Activated CD4-positive, alpha-beta T cell treated with anti-CD3 and anti-CD28 coated beads for 36 hours (primary cell): ENCODE measurements at regions of chr3 and their contacts with region 1.

Region 1: DNA sequence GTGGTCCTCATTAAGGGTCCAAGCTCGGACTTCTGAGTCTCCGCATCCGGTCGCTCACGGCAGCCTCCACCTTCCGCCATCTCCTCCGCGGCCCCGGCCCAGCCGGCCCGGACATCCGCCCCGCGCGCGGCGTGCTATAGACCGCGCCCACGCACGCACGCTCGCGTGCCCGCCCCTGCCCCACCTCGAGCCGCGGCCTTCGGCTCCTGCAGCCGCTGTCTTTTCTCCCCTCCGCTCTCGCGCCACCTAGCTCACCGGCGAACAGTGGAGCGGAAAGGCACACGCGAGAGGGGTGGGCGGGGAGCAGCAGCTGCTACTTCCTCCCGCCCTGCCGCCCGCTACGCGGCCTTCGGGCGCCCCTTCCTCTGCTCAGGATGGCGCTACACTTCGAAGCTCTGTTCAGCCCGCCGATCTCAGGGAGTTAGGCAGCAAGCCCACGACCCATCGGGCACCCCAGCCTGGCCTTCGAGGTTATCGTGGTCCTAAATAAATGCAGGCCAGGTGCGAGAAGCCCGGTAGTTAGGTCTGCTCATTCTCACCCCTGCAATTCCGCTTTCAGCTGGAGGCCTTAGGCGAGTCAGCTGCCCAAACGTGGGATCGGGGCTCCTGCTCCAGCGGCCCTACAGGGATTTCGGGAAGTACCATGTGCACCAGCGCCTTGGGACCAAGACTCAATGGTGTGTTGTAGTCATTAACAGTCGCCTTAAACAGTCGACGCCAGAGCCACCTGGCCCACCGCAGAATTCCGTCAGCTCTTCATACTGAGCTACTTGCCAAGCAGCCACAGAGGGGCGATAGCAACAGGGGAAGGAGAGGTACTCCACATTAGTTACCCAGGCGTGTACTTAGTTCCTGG is at the start of gene USP4:
- DNase-seq: peak; percentile 97
- ATAC-seq: peak; percentile 89
- H3K4me3 Mint-ChIP-seq: peak within 1 kb of the TSS; percentile 99
- H3K27ac Mint-ChIP-seq: peak within 1 kb of the TSS; percentile 96
- H3K4me1 Mint-ChIP-seq: peaks cover 49% of the 10 kb centered on the region
- H3K27me3 Mint-ChIP-seq: no peaks in the 10 kb centered on the region
- total RNA-seq, gene USP4: 69.3 to 71.8 TPM

Region 2: GRCh38 chr3:49007068-49007770 is 333.0 kb before region 1 on chr3 and contains the start of gene WDR6:
- CTCF ChIA-PET with region 1: no interaction called
- POLR2A ChIA-PET with region 1: no interaction called
- intact Hi-C with region 1: loop called in 1 of 2 experiments (anchors 1 kb)
- DNase-seq: peak; percentile 99
- ATAC-seq: peak; percentile 90
- H3K4me3 Mint-ChIP-seq: peak within 1 kb of the TSS; percentile 100
- H3K27ac Mint-ChIP-seq: peak within 1 kb of the TSS; percentile 100
- H3K4me1 Mint-ChIP-seq: peaks cover 16% of the 10 kb centered on the region
- H3K27me3 Mint-ChIP-seq: no peaks in the 10 kb centered on the region
- total RNA-seq, gene WDR6: 109 to 127 TPM

Region 3: DNA sequence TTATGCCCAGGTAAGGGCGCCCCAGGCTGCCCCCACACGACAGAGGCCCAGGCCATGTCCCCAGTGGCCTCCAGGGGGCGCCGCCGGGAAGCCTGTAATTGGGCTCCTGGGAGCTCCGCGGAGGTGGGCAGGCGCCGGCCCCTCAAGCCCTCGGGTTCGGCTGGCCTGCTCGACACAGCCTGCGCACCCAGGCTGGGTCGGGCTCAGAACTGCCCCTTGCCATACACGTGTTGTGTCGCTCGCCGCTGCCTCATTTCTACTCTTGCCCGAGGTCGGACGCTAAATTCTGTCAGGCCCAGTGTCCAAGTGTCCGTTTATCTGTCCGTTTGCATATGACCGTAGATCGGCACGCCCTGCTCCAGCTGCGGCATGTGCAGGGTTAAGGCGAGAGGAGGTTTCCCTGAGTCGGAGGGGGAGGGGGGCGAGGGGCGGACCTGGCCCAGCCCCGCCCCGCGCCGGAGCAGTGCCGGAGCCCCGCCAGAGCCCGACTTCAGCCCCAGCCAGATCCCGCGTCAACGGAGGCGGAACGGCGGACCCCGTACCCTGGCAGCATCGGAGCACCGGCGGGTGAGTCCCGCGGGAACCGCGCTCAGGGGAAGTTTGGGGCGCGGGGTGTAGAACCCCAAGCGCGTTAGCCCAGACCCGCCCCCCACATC is 168.9 kb before region 1 on chr3 and contains the start of gene KLHDC8B:
- CTCF ChIA-PET with region 1: interaction called, 4 read pairs
- POLR2A ChIA-PET with region 1: no interaction called
- intact Hi-C with region 1: loop called in 1 of 2 experiments (anchors 1 kb)
- DNase-seq: peak; percentile 92
- ATAC-seq: peak; percentile 87
- H3K4me3 Mint-ChIP-seq: peak within 1 kb of the TSS; percentile 78
- H3K27ac Mint-ChIP-seq: peak within 1 kb of the TSS; percentile 76
- H3K4me1 Mint-ChIP-seq: peaks cover 17% of the 10 kb centered on the region
- H3K27me3 Mint-ChIP-seq: no peaks in the 10 kb centered on the region
- total RNA-seq, gene KLHDC8B: 1.2 to 3.1 TPM

Region 4: GRCh38 chr3:49358217-49358883 is 18.2 kb after region 1 on chr3 and contains the start of gene GPX1:
- CTCF ChIA-PET with region 1: interaction called, 7 read pairs
- POLR2A ChIA-PET with region 1: interaction called, 9 read pairs
- intact Hi-C with region 1: loop called (anchors 1 kb)
- DNase-seq: peak; percentile 92
- ATAC-seq: peak; percentile 85
- H3K4me3 Mint-ChIP-seq: peak within 1 kb of the TSS; percentile 94
- H3K27ac Mint-ChIP-seq: peak within 1 kb of the TSS; percentile 98
- H3K4me1 Mint-ChIP-seq: peaks cover 18% of the 10 kb centered on the region
- H3K27me3 Mint-ChIP-seq: no peaks in the 10 kb centered on the region
- total RNA-seq, gene GPX1: 182 to 306 TPM

Region 5: DNA sequence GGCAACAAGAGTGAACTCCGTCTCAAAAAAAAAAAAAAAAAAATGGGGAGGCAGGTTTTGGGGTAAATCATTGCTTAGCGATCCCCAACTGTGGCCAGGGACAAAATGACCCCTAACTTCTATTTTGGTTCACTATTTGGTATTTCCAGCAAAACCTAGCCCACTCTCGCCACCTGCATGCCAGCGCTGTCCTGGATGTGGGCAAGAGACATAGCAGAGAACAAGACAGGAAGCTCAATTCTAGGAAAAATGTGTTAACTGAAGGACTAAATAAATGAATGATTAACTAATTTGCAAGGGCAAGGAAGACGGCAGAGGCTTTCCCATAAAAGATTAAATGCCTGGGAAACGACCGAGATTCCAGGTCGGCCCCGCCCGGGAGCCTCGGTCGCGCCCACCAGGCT is 88.5 kb after region 1 on chr3:
- CTCF ChIA-PET with region 1: interaction called, 11 read pairs
- POLR2A ChIA-PET with region 1: interaction called, 6 read pairs
- intact Hi-C with region 1: loop called (anchors 1 kb)
- DNase-seq: no peak
- ATAC-seq: peak; percentile 2
- H3K4me3 Mint-ChIP-seq: peak overlapping the region; percentile 84
- H3K27ac Mint-ChIP-seq: peak overlapping the region; percentile 93
- H3K4me1 Mint-ChIP-seq: peaks cover 16% of the 10 kb centered on the region
- H3K27me3 Mint-ChIP-seq: no peaks in the 10 kb centered on the region